Caco-2 (cell line): ENCODE measurements at regions of chr1 and their contacts with region 1.

Region 1: DNA sequence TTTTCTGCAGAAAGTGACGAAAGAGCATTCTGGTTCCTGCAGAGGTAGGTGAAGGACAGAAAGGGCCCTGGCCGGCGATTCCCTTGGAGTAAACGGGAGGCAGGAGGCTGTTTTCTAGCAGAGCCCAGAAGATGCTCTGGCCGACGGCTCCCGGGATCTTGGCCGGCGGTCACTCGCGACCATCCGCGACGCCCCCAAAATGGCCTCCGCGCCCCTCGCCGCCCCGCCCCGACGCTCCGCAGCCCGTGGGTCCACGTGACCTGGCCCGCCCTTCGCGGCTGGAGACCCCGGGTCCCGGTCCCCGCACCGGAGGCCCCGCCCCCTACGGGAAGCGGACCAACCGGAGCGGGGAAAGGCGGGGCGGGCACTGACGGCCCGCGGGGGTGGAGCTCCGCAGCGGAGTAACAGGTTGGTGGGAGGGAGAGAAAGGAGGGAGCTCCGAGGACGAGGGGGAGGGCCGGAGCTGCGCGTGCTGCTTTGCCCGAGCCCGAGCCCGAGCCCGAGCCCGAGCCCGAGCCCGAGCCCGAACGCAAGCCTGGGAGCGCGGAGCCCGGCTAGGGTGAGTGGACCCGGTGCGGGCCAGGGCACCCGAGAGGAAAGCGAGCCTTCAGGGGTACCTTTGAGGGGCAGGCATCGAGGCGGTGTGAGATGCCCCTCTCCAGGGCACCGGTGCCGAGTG is at the start of gene CGN:
- DNase-seq: peak; percentile 97 to 98
- H3K4me3 ChIP-seq: peak within 1 kb of the TSS; percentile 82
- H3K4me3 Mint-ChIP-seq: peak within 1 kb of the TSS; percentile 96
- H3K27ac Mint-ChIP-seq: peak within 1 kb of the TSS; percentile 94
- H3K4me1 ChIP-seq: peaks cover 33% of the 10 kb centered on the region
- H3K4me1 Mint-ChIP-seq: peaks cover 34% of the 10 kb centered on the region
- H3K27me3 ChIP-seq: no peaks in the 10 kb centered on the region
- H3K27me3 Mint-ChIP-seq: no peaks in the 10 kb centered on the region
- CTCF ChIP-seq: no peak
- total RNA-seq, gene CGN: 147 TPM in 2 replicates

Region 2: GRCh38 chr1:151281969-151282882 is 228.9 kb before region 1 on chr1 and contains the start of gene ZNF687:
- CTCF ChIA-PET with region 1: no interaction called
- POLR2A ChIA-PET with region 1: interaction called, 3 read pairs
- intact Hi-C with region 1: loop called (anchors 5 kb)
- DNase-seq: peak; percentile 100
- H3K4me3 ChIP-seq: peak within 1 kb of the TSS; percentile 74
- H3K4me3 Mint-ChIP-seq: peak within 1 kb of the TSS; percentile 88
- H3K27ac Mint-ChIP-seq: peak within 1 kb of the TSS; percentile 97
- H3K4me1 ChIP-seq: 0 out of 2 replicates have a peak, but pooled peaks cover 4% of the 10 kb centered on the region
- H3K4me1 Mint-ChIP-seq: peaks cover 6% of the 10 kb centered on the region
- H3K27me3 ChIP-seq: no peaks in the 10 kb centered on the region
- H3K27me3 Mint-ChIP-seq: no peaks in the 10 kb centered on the region
- CTCF ChIP-seq: no peak
- total RNA-seq, gene ZNF687: 23.9 and 30.2 TPM in 2 replicates

Region 3: DNA sequence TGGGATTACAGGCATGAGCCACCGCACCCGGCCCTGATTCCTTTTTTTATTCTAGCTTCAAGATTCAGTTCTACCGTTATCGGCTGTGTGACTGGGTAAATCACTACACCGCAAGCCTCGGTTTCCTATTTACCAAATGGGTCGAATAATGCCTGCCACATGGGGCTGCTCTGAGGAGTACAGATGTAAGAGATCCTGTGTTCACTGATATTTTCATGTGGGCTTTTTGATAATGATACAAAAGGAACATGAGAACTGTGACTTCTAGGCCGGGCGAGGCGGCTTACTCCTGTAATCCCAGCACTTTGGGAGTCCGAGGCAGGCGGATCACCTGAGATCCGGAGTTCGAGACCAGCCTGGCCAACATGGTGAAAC is 112.4 kb before region 1 on chr1:
- CTCF ChIA-PET with region 1: no interaction called
- POLR2A ChIA-PET with region 1: no interaction called
- intact Hi-C with region 1: no loop called
- DNase-seq: no peak
- H3K4me3 ChIP-seq: 0 out of 2 replicates have a peak overlapping the region, but pooled peaks have one; percentile 20
- H3K4me3 Mint-ChIP-seq: peak overlapping the region; percentile 99
- H3K27ac Mint-ChIP-seq: peak overlapping the region; percentile 99
- H3K4me1 ChIP-seq: peaks cover 7% of the 10 kb centered on the region
- H3K4me1 Mint-ChIP-seq: peaks cover 13% of the 10 kb centered on the region
- H3K27me3 ChIP-seq: no peaks in the 10 kb centered on the region
- H3K27me3 Mint-ChIP-seq: no peaks in the 10 kb centered on the region
- CTCF ChIP-seq: no peak

Region 4: DNA sequence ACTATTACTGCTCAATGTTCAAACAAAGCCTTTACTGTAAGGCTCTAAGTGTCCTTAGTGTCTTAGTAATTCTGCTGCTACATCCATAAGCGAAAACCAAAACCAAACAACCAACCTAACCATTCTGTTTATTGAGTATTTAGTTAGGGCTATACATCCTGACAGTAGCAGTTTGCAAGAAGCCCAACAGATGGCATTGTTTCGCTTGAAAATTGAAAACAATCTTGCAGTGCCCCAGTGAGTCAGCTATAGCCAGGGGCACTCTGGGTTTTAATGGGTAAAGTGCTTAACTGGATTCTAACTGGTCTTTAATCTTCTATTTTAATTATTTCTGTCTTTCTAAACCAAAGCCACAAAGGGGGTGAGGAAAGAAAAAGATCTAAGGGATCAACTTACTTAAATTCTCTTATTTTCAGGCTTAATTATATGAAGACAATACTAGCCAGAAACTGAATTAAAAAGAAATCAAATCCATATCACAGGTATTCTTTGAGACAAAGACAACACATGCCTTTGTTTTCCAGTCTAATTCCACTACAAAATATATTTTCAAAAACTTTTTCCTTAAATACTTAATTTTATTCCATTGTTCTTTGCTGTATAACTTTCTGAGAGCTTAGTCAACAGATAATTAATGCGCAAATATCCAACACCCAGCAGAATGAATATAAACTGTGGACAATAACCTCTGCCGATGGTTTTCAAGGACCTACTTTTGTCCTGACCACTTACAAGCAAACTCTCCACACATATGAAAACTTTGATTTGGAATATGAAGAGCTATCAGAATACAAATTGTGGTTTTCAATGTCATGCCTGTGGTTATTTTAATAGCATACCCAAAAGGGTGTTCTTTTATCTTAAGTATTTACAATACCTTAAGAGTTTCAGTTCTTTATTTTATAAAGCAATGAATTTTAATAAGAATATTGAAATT is 67.0 kb before region 1 on chr1:
- CTCF ChIA-PET with region 1: interaction called, 4 read pairs
- POLR2A ChIA-PET with region 1: no interaction called
- intact Hi-C with region 1: loop called (anchors 2 kb)
- DNase-seq: peak; percentile 74 to 80
- H3K4me3 ChIP-seq: no peak overlapping the region
- H3K4me3 Mint-ChIP-seq: no peak overlapping the region
- H3K27ac Mint-ChIP-seq: peak overlapping the region; percentile 70
- H3K4me1 ChIP-seq: peaks cover 5% of the 10 kb centered on the region; the same call in 1 of the 2 replicates
- H3K4me1 Mint-ChIP-seq: peaks cover 6% of the 10 kb centered on the region
- H3K27me3 ChIP-seq: no peaks in the 10 kb centered on the region
- H3K27me3 Mint-ChIP-seq: no peaks in the 10 kb centered on the region
- CTCF ChIP-seq: peak; percentile 75 to 82

Region 5: DNA sequence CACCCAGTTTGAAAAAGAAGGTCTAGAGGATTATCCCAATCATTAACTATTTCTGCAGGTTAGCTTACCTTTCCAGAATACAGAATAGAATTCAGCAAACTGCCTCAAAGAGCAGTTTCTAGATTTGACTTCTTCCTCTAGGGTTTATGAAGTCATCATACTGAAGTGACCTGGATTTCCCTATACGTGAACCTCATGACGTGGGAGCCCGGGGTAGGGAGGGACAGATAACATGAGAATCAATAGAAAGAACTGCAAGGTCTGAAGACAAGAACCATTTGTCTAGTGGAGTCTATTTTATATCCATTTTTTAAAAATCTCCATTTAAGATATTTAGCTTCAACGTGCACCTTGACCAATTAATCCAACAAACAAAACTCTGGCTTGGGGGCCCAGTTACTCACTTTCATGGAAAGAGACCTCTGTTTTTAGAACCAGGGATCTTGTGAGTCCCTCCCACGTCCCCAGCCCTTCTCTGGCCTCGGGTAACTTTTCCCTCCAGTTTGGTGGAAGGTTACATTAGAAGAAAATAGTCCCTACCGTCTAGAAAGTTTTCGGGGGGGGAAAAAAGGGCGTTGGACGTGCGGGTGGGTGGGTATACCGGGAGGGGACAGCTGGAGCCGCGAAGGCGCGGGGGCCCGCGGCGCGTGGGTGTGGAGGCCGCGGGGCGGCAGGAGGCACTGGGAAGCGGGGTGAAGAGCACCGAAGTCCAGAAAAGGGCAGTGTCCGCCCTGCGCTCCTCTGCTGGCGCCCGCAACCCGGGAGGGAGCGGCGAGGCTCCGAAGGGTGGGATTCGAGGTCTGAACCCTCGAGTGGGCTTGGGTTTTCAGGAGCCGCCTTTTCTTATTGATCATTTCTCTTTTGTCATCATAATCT is 38.0 kb before region 1 on chr1:
- CTCF ChIA-PET with region 1: no interaction called
- POLR2A ChIA-PET with region 1: interaction called, 9 read pairs
- intact Hi-C with region 1: loop called (anchors 1 kb)
- DNase-seq: peak; percentile 55 to 67
- H3K4me3 ChIP-seq: peak overlapping the region; percentile 76
- H3K4me3 Mint-ChIP-seq: peak overlapping the region; percentile 73
- H3K27ac Mint-ChIP-seq: peak overlapping the region; percentile 91
- H3K4me1 ChIP-seq: peaks cover 2% of the 10 kb centered on the region
- H3K4me1 Mint-ChIP-seq: peaks cover 7% of the 10 kb centered on the region
- H3K27me3 ChIP-seq: no peaks in the 10 kb centered on the region
- H3K27me3 Mint-ChIP-seq: no peaks in the 10 kb centered on the region
- CTCF ChIP-seq: no peak

Region 6: GRCh38 chr1:151494741-151495281 is 16.3 kb before region 1 on chr1:
- CTCF ChIA-PET with region 1: interaction called, 9 read pairs
- POLR2A ChIA-PET with region 1: interaction called, 41 read pairs
- intact Hi-C with region 1: no loop called
- DNase-seq: peak; percentile 57 to 60
- H3K4me3 ChIP-seq: no peak overlapping the region
- H3K4me3 Mint-ChIP-seq: no peak overlapping the region
- H3K27ac Mint-ChIP-seq: peak overlapping the region; percentile 56
- H3K4me1 ChIP-seq: peaks cover 21% of the 10 kb centered on the region
- H3K4me1 Mint-ChIP-seq: peaks cover 23% of the 10 kb centered on the region
- H3K27me3 ChIP-seq: no peaks in the 10 kb centered on the region
- H3K27me3 Mint-ChIP-seq: no peaks in the 10 kb centered on the region
- CTCF ChIP-seq: no peak

Region 7: DNA sequence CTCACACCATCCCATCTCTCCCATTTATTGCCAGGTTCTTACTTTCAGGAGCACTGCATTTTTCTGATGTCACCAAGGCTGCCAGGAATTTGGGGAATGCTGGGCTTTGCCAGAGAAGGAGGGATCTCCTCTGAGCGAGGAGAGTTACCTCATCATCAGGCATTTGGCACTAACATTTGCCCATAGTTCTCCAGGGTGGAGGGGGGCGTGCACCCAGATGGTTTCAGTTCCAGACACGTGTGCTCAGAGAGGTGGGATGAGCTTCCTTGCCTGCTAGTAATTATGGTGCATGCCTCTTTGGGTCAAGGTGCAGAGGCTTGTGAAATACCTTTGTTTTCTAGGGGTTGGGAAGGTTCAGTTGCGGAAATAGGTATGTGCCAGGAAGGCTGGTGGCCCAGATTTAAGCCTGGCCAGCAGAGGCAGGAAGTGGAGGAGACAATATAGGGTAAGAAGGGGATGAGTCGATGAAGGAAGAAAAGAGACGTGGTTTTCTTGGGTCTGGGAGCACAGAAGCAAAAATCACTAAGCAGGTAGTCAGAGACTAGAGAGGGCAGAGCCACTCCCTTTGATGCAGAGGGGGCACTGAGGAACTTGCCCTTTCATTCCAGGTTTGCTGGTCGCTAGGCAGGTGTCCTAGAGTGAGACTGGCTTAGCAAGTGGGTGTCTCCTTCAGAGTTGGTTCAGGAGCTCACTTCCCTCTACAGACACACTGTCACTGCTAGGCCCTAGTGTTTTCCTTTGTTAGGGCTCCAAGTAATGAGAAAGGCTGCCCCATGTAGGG is 36.2 kb after region 1 on chr1:
- CTCF ChIA-PET with region 1: no interaction called
- POLR2A ChIA-PET with region 1: interaction called, 7 read pairs
- intact Hi-C with region 1: loop called (anchors 1 kb)
- DNase-seq: peak; percentile 92 to 96
- H3K4me3 ChIP-seq: no peak overlapping the region
- H3K4me3 Mint-ChIP-seq: peak overlapping the region; percentile 64
- H3K27ac Mint-ChIP-seq: peak overlapping the region; percentile 89
- H3K4me1 ChIP-seq: peaks cover 65% of the 10 kb centered on the region
- H3K4me1 Mint-ChIP-seq: peaks cover 62% of the 10 kb centered on the region
- H3K27me3 ChIP-seq: no peaks in the 10 kb centered on the region
- H3K27me3 Mint-ChIP-seq: no peaks in the 10 kb centered on the region
- CTCF ChIP-seq: no peak

Region 8: GRCh38 chr1:151574545-151575529 is 63.7 kb after region 1 on chr1:
- CTCF ChIA-PET with region 1: no interaction called
- POLR2A ChIA-PET with region 1: no interaction called
- intact Hi-C with region 1: no loop called
- DNase-seq: no peak
- H3K4me3 ChIP-seq: no peak overlapping the region
- H3K4me3 Mint-ChIP-seq: no peak overlapping the region
- H3K27ac Mint-ChIP-seq: no peak overlapping the region
- H3K4me1 ChIP-seq: peaks cover 4% of the 10 kb centered on the region
- H3K4me1 Mint-ChIP-seq: peaks cover 11% of the 10 kb centered on the region
- H3K27me3 ChIP-seq: no peaks in the 10 kb centered on the region
- H3K27me3 Mint-ChIP-seq: no peaks in the 10 kb centered on the region
- CTCF ChIP-seq: no peak